CD4-positive, alpha-beta memory T cell (primary cell): ENCODE measurements at regions of chr11 and their contacts with region 1.

Region 1: GRCh38 chr11:74929431-74930363 is 19.2 kb downstream of the XRRA1 start:
- DNase-seq: peak; percentile 59 to 74 (median 63)
- H3K4me3 ChIP-seq: no peak overlapping the region
- H3K4me3 Mint-ChIP-seq: no peak overlapping the region
- H3K27ac ChIP-seq: no peak overlapping the region
- H3K27ac Mint-ChIP-seq: no peak overlapping the region
- H3K4me1 ChIP-seq: no peaks in the 10 kb centered on the region
- H3K4me1 Mint-ChIP-seq: peaks cover 0 to 6% (median 0%) of the 10 kb centered on the region in 4 donors
- H3K27me3 ChIP-seq: no peaks in the 10 kb centered on the region
- H3K27me3 Mint-ChIP-seq: no peaks in the 10 kb centered on the region

Region 2: DNA sequence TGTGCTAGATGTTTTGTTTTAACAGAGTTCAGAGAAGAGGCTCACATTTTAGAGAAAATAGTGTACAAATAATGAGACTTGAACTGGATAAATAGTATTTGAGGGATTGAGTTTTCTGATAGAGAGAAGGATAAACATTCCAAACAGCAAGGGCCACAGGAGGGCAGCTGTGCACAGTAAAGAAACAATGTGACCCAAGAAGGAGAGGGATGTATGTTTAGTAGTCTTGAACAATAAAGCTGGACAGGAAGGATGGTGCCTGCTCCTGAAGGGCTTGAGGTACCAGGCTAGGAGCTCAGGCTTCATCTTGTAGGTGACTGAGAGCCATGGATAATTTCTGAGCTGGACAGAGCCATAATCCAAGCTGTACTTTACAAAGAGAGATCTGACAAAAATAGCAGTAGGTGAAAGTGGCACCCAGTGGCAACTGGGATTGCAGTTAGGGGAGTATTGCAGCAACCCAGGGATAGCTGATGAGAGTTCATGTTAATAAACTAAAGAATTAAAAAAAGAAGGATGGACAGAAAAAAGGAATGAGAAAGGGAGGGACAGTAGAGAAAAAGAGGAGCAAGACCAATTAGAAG is 11.7 kb after region 1 on chr11:
- CTCF ChIA-PET with region 1: interaction called, 30 read pairs
- POLR2A ChIA-PET with region 1: interaction called, 4 read pairs
- intact Hi-C with region 1: no loop called
- DNase-seq: no peak
- H3K4me3 ChIP-seq: no peak overlapping the region
- H3K4me3 Mint-ChIP-seq: no peak overlapping the region
- H3K27ac ChIP-seq: no peak overlapping the region
- H3K27ac Mint-ChIP-seq: peak overlapping the region in 1 of 7 donors; percentile 6
- H3K4me1 ChIP-seq: no peaks in the 10 kb centered on the region
- H3K4me1 Mint-ChIP-seq: peaks cover 0 to 42% (median 7%) of the 10 kb centered on the region in 4 donors
- H3K27me3 ChIP-seq: no peaks in the 10 kb centered on the region
- H3K27me3 Mint-ChIP-seq: no peaks in the 10 kb centered on the region

Region 3: GRCh38 chr11:75022759-75023396 is 93.2 kb after region 1 on chr11:
- CTCF ChIA-PET with region 1: interaction called, 11 read pairs
- POLR2A ChIA-PET with region 1: no interaction called
- intact Hi-C with region 1: no loop called
- DNase-seq: peak; percentile 59 to 69 (median 62)
- H3K4me3 ChIP-seq: no peak overlapping the region
- H3K4me3 Mint-ChIP-seq: no peak overlapping the region
- H3K27ac ChIP-seq: no peak overlapping the region
- H3K27ac Mint-ChIP-seq: peak overlapping the region in 1 of 7 donors; percentile 10
- H3K4me1 ChIP-seq: no peaks in the 10 kb centered on the region
- H3K4me1 Mint-ChIP-seq: no peaks in the 10 kb centered on the region
- H3K27me3 ChIP-seq: no peaks in the 10 kb centered on the region
- H3K27me3 Mint-ChIP-seq: peaks cover 0 to 1% of the 10 kb centered on the region in 2 donors

Region 4: GRCh38 chr11:75031771-75032549 is 102.3 kb after region 1 on chr11:
- CTCF ChIA-PET with region 1: interaction called, 15 read pairs
- POLR2A ChIA-PET with region 1: no interaction called
- intact Hi-C with region 1: loop called (anchors 1 kb)
- DNase-seq: peak; percentile 24 to 40 (median 29)
- H3K4me3 ChIP-seq: no peak overlapping the region
- H3K4me3 Mint-ChIP-seq: no peak overlapping the region
- H3K27ac ChIP-seq: no peak overlapping the region
- H3K27ac Mint-ChIP-seq: no peak overlapping the region
- H3K4me1 ChIP-seq: no peaks in the 10 kb centered on the region
- H3K4me1 Mint-ChIP-seq: peaks cover 0 to 8% (median 1%) of the 10 kb centered on the region in 4 donors
- H3K27me3 ChIP-seq: no peaks in the 10 kb centered on the region
- H3K27me3 Mint-ChIP-seq: peaks cover 0 to 1% of the 10 kb centered on the region in 2 donors

Region 5: GRCh38 chr11:75087319-75088305 is 157.9 kb after region 1 on chr11:
- CTCF ChIA-PET with region 1: no interaction called
- POLR2A ChIA-PET with region 1: no interaction called
- intact Hi-C with region 1: no loop called
- DNase-seq: no peak
- H3K4me3 ChIP-seq: no peak overlapping the region
- H3K4me3 Mint-ChIP-seq: no peak overlapping the region
- H3K27ac ChIP-seq: no peak overlapping the region
- H3K27ac Mint-ChIP-seq: no peak overlapping the region
- H3K4me1 ChIP-seq: no peaks in the 10 kb centered on the region
- H3K4me1 Mint-ChIP-seq: no peaks in the 10 kb centered on the region
- H3K27me3 ChIP-seq: no peaks in the 10 kb centered on the region
- H3K27me3 Mint-ChIP-seq: peaks cover 24 to 25% of the 10 kb centered on the region in 2 donors

Region 6: GRCh38 chr11:75204685-75205563 is 275.2 kb after region 1 on chr11:
- CTCF ChIA-PET with region 1: interaction called, 23 read pairs
- POLR2A ChIA-PET with region 1: no interaction called
- intact Hi-C with region 1: loop called (anchors 1 kb)
- DNase-seq: peak; percentile 61 to 75 (median 68)
- H3K4me3 ChIP-seq: no peak overlapping the region
- H3K4me3 Mint-ChIP-seq: no peak overlapping the region
- H3K27ac ChIP-seq: no peak overlapping the region
- H3K27ac Mint-ChIP-seq: no peak overlapping the region
- H3K4me1 ChIP-seq: no peaks in the 10 kb centered on the region
- H3K4me1 Mint-ChIP-seq: no peaks in the 10 kb centered on the region
- H3K27me3 ChIP-seq: no peaks in the 10 kb centered on the region
- H3K27me3 Mint-ChIP-seq: peaks cover 3 to 7% of the 10 kb centered on the region in 2 donors

Region 7: GRCh38 chr11:75241036-75241905 is 311.6 kb after region 1 on chr11:
- CTCF ChIA-PET with region 1: interaction called, 19 read pairs
- POLR2A ChIA-PET with region 1: no interaction called
- intact Hi-C with region 1: loop called (anchors 2 kb)
- DNase-seq: peak; percentile 76 to 90 (median 86)
- H3K4me3 ChIP-seq: peak overlapping the region in 1 of 2 donors; percentile 47
- H3K4me3 Mint-ChIP-seq: peak overlapping the region in 7 of 8 donors; percentile 67 to 82 (median 73)
- H3K27ac ChIP-seq: no peak overlapping the region
- H3K27ac Mint-ChIP-seq: peak overlapping the region in 1 of 7 donors; percentile 87
- H3K4me1 ChIP-seq: peaks cover 14% of the 10 kb centered on the region
- H3K4me1 Mint-ChIP-seq: peaks cover 1 to 16% (median 5%) of the 10 kb centered on the region in 4 donors
- H3K27me3 ChIP-seq: peaks cover 16% of the 10 kb centered on the region
- H3K27me3 Mint-ChIP-seq: peaks cover 24 to 27% of the 10 kb centered on the region in 2 donors

Region 8: GRCh38 chr11:75248690-75249268 is 319.1 kb after region 1 on chr11:
- CTCF ChIA-PET with region 1: interaction called, 29 read pairs
- POLR2A ChIA-PET with region 1: no interaction called
- intact Hi-C with region 1: loop called (anchors 1 kb)
- DNase-seq: peak; percentile 81 to 87 (median 84)
- H3K4me3 ChIP-seq: no peak overlapping the region
- H3K4me3 Mint-ChIP-seq: no peak overlapping the region
- H3K27ac ChIP-seq: no peak overlapping the region
- H3K27ac Mint-ChIP-seq: peak overlapping the region in 1 of 7 donors; percentile 47
- H3K4me1 ChIP-seq: no peaks in the 10 kb centered on the region
- H3K4me1 Mint-ChIP-seq: peaks cover 0 to 3% (median 1%) of the 10 kb centered on the region in 4 donors
- H3K27me3 ChIP-seq: no peaks in the 10 kb centered on the region
- H3K27me3 Mint-ChIP-seq: peaks cover 10 to 14% of the 10 kb centered on the region in 2 donors